Activated B cell treated with CpG ODN at 0.5 μM for 24 hours (primary cell): ENCODE measurements at regions of chr10 and their contacts with region 1.

Region 1: GRCh38 chr10:122298598-122299301 is 27.7 kb downstream of the BTBD16 start:
- DNase-seq: peak; percentile 48
- ATAC-seq: peak; percentile 89
- H3K4me3 Mint-ChIP-seq: no peak overlapping the region
- H3K27ac Mint-ChIP-seq: no peak overlapping the region
- H3K4me1 Mint-ChIP-seq: peaks cover 2% of the 10 kb centered on the region
- H3K27me3 Mint-ChIP-seq: peaks cover 13% of the 10 kb centered on the region
- CTCF ChIP-seq: no peak

Region 2: GRCh38 chr10:122078965-122079795 is 219.6 kb before region 1 on chr10:
- CTCF ChIA-PET with region 1: no interaction called
- POLR2A ChIA-PET with region 1: no interaction called
- intact Hi-C with region 1: no loop called
- DNase-seq: no peak
- ATAC-seq: no peak
- H3K4me3 Mint-ChIP-seq: no peak overlapping the region
- H3K27ac Mint-ChIP-seq: no peak overlapping the region
- H3K4me1 Mint-ChIP-seq: no peaks in the 10 kb centered on the region
- H3K27me3 Mint-ChIP-seq: no peaks in the 10 kb centered on the region
- CTCF ChIP-seq: no peak

Region 3: GRCh38 chr10:122342293-122343134 is 43.8 kb after region 1 on chr10:
- CTCF ChIA-PET with region 1: interaction called, 12 read pairs
- POLR2A ChIA-PET with region 1: no interaction called
- intact Hi-C with region 1: loop called (anchors 1 kb)
- DNase-seq: no peak
- ATAC-seq: peak; percentile 65
- H3K4me3 Mint-ChIP-seq: no peak overlapping the region
- H3K27ac Mint-ChIP-seq: no peak overlapping the region
- H3K4me1 Mint-ChIP-seq: peaks cover 16% of the 10 kb centered on the region
- H3K27me3 Mint-ChIP-seq: peaks cover 13% of the 10 kb centered on the region
- CTCF ChIP-seq: no peak

Region 4: GRCh38 chr10:122419876-122420623 is 121.3 kb after region 1 on chr10:
- CTCF ChIA-PET with region 1: no interaction called
- POLR2A ChIA-PET with region 1: no interaction called
- intact Hi-C with region 1: no loop called
- DNase-seq: no peak
- ATAC-seq: no peak
- H3K4me3 Mint-ChIP-seq: no peak overlapping the region
- H3K27ac Mint-ChIP-seq: no peak overlapping the region
- H3K4me1 Mint-ChIP-seq: peaks cover 74% of the 10 kb centered on the region
- H3K27me3 Mint-ChIP-seq: no peaks in the 10 kb centered on the region
- CTCF ChIP-seq: no peak